Endothelial cell of umbilical vein (primary cell): ENCODE measurements at regions of chr10 and their contacts with region 1.

Region 1: GRCh38 chr10:112026438-112026837 is 157.1 kb downstream of the GPAM start:
- DNase-seq: no peak
- H3K4me3 ChIP-seq: no peak overlapping the region
- H3K27ac ChIP-seq: no peak overlapping the region
- H3K4me1 ChIP-seq: no peaks in the 10 kb centered on the region
- H3K27me3 ChIP-seq: no peaks in the 10 kb centered on the region
- CTCF ChIP-seq: no peak
- POLR2A ChIP-seq: no peak

Region 2: DNA sequence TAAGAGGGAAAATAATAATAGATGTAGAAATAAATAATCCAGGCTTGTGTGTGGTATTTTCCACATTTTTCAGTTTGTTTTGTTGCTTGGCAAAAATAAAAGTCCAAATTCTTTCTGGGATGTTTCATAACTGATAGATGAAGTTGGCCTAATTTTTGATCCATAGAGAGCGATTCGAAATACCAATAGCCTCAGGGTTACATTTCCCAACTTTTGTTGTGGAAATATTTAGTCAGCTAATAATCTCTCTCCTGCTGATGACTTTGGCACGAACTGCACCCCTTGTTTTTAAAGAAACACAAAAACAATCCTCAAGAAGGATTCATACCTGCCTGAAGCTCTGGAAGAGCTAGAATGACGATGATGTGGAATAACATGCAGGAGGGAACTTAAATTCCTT is 466.4 kb before region 1 on chr10:
- CTCF ChIA-PET with region 1: no interaction called
- POLR2A ChIA-PET with region 1: no interaction called
- dilution Hi-C with region 1: no loop called
- intact Hi-C with region 1: no loop called
- DNase-seq: no peak
- H3K4me3 ChIP-seq: no peak overlapping the region
- H3K27ac ChIP-seq: no peak overlapping the region
- H3K4me1 ChIP-seq: no peaks in the 10 kb centered on the region
- H3K27me3 ChIP-seq: no peaks in the 10 kb centered on the region
- CTCF ChIP-seq: no peak
- POLR2A ChIP-seq: no peak

Region 3: GRCh38 chr10:111996103-111996502 is 30.3 kb before region 1 on chr10:
- CTCF ChIA-PET with region 1: no interaction called
- POLR2A ChIA-PET with region 1: no interaction called
- dilution Hi-C with region 1: no loop called
- intact Hi-C with region 1: no loop called
- DNase-seq: no peak
- H3K4me3 ChIP-seq: no peak overlapping the region
- H3K27ac ChIP-seq: no peak overlapping the region
- H3K4me1 ChIP-seq: no peaks in the 10 kb centered on the region
- H3K27me3 ChIP-seq: no peaks in the 10 kb centered on the region
- CTCF ChIP-seq: no peak
- POLR2A ChIP-seq: no peak

Region 4: GRCh38 chr10:112006831-112007230 is 19.6 kb before region 1 on chr10:
- CTCF ChIA-PET with region 1: no interaction called
- POLR2A ChIA-PET with region 1: no interaction called
- dilution Hi-C with region 1: no loop called
- intact Hi-C with region 1: loop called (anchors 1 kb)
- DNase-seq: no peak
- H3K4me3 ChIP-seq: no peak overlapping the region
- H3K27ac ChIP-seq: no peak overlapping the region
- H3K4me1 ChIP-seq: no peaks in the 10 kb centered on the region
- H3K27me3 ChIP-seq: no peaks in the 10 kb centered on the region
- CTCF ChIP-seq: no peak
- POLR2A ChIP-seq: no peak

Region 5: GRCh38 chr10:112071596-112072133 is 45.2 kb after region 1 on chr10:
- CTCF ChIA-PET with region 1: no interaction called
- POLR2A ChIA-PET with region 1: no interaction called
- dilution Hi-C with region 1: no loop called
- intact Hi-C with region 1: no loop called
- DNase-seq: no peak
- H3K4me3 ChIP-seq: no peak overlapping the region
- H3K27ac ChIP-seq: no peak overlapping the region
- H3K4me1 ChIP-seq: no peaks in the 10 kb centered on the region
- H3K27me3 ChIP-seq: no peaks in the 10 kb centered on the region
- CTCF ChIP-seq: no peak
- POLR2A ChIP-seq: no peak